ENCODE measurements at regions of chr19 and their contacts with region 1.

Region 1: GRCh38 chr19:47013041-47013517 is 6.6 kb upstream of the NPAS1 start:
- DNase-seq: peak; percentile 82
- CTCF ChIP-seq: peak; percentile 98

Region 2: DNA sequence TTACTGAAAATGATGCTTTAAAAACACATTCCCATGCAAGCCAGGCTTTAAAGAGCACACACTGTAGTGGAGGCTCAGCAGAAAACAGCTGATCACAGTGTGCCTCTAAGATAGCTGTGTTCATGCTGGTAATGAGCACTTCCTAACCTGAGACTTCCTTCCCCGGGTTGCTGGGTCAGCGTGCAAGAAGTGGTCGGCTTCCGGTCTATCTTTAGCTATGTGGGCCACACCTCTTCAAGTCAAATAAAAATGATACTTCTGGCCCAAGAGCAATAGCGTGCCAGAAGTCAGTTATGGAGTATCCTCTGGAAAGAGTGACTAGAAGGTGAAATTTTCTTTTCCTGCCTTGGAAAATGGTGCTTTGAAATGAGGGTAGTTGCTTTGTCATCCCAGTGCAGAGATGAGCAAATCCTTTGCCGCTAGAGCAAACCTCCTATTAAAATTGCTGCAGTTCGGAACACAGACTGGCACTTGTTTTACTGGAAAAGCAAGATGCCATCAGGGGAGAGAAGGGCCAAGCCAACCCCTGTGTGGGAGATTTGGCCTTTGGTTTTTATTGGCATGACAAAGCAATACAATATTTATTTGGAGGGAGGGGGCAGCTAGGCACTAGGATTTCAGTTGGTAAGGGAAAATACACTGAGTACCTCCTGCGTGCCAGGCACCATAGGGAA is 88.1 kb before region 1 on chr19:
- CTCF ChIA-PET with region 1: interaction called, 14 read pairs
- POLR2A ChIA-PET with region 1: no interaction called
- DNase-seq: peak; percentile 39
- CTCF ChIP-seq: no peak

Region 3: DNA sequence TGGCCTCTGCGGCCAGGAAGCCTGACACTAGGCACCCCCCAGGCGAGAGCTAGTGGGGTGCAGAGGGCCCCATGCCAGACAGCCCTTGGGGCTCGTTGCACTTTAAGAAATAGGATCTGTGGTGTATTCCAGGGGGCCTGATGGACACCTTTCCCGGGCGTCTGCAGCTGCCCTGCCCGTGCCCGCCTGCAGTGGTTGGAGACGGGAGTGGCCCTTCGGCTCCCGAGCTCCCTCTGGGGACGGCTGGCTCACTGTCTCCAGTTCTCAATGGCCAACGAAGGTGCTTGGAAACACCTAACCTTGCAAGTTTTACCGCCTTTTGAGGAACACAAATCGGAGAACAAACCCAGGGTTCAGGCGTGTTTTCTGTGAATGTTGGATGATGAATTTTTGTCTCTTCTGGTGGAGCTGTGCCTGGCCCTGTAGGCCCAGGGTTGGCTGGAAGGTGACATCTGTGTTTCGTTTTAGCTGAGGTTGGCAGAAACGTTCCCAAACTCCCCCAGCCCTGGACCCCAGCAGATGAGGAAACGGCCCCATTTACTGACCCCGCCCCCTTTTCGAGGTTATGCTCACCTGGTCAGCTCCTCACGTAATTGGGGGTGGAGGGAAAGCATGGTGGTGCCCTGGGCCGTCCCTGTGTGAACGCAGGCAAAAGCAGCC is 10.8 kb before region 1 on chr19:
- CTCF ChIA-PET with region 1: interaction called, 25 read pairs
- POLR2A ChIA-PET with region 1: no interaction called
- DNase-seq: no peak
- CTCF ChIP-seq: no peak

Region 4: GRCh38 chr19:47044946-47045866 is 32.1 kb after region 1 on chr19:
- CTCF ChIA-PET with region 1: interaction called, 13 read pairs
- POLR2A ChIA-PET with region 1: no interaction called
- DNase-seq: no peak
- CTCF ChIP-seq: no peak

Region 5: GRCh38 chr19:47130591-47131227 is 117.6 kb after region 1 on chr19 and contains the start of gene SAE1:
- CTCF ChIA-PET with region 1: interaction called, 21 read pairs
- POLR2A ChIA-PET with region 1: no interaction called
- DNase-seq: peak; percentile 99
- CTCF ChIP-seq: peak; percentile 78